ENCODE measurements at regions of chr2 and their contacts with region 1.

Region 1: DNA sequence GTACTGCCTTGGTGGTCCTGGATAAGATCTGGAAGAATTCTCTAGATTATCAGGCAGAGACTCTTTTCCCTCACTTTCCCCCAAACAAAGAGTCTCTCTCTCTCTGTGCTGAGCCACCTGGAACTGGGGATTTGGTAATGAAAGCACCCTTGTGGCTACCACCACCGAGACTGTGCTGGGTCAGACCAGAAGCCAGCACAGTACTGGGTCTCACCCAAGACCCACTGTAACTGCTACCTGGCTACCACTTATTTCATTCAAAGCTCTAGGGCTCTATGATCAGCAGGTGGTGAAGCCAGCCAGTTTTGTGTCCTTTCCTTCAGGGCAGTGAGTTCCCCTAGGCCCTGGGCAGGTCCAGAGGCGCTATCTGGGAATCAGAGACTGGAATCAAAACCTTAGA is 269.6 kb upstream of the CWC22 start:
- DNase-seq: no peak
- ATAC-seq: no peak
- H3K4me3 ChIP-seq: no peak overlapping the region
- H3K27ac ChIP-seq: no peak overlapping the region
- H3K4me1 ChIP-seq: no peaks in the 10 kb centered on the region
- H3K27me3 ChIP-seq: no peaks in the 10 kb centered on the region
- CTCF ChIP-seq: no peak
- POLR2A ChIP-seq: no peak

Region 2: DNA sequence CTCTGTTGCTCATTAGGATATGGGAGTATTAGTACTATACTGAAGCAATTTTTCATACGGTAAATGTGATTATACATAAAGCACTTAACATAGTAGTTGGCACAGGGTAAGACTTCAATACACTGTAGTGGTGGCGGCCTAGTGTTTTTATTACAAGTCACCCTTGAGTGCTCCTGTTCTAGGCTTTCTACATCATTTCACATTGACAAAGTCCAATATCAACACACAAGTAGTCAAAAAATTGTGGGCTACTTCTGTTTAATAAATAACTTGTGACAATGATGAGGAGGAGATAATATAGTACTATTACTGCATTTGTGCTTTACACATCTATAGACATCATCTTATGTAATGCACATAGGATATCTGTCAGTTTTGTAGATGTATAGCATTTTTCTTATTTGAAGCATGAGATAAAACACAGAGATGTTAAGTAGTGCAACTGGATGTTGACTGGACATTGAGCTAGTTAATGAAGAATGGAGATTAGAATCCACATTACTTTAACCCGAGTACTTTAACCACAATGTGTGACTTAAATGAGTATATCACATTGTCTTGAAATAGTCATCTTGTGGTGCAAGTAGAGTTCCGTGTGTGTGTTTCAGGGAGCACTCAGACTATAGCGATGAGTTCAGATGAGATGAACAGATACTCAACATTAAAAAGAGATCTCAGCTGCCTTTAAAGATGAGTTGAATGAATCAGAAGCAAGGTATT is 550.1 kb before region 1 on chr2:
- in situ Hi-C with region 1: no loop called
- intact Hi-C with region 1: loop called (anchors 10 kb)
- DNase-seq: no peak
- ATAC-seq: no peak
- H3K4me3 ChIP-seq: no peak overlapping the region
- H3K27ac ChIP-seq: no peak overlapping the region
- H3K4me1 ChIP-seq: no peaks in the 10 kb centered on the region
- H3K27me3 ChIP-seq: no peaks in the 10 kb centered on the region
- CTCF ChIP-seq: no peak
- POLR2A ChIP-seq: no peak

Measured in gastrocnemius medialis (tissue), 4 donors.